Vagina (tissue), 2 donors: ENCODE measurements at regions of chr22 and their contacts with region 1.

Region 1: DNA sequence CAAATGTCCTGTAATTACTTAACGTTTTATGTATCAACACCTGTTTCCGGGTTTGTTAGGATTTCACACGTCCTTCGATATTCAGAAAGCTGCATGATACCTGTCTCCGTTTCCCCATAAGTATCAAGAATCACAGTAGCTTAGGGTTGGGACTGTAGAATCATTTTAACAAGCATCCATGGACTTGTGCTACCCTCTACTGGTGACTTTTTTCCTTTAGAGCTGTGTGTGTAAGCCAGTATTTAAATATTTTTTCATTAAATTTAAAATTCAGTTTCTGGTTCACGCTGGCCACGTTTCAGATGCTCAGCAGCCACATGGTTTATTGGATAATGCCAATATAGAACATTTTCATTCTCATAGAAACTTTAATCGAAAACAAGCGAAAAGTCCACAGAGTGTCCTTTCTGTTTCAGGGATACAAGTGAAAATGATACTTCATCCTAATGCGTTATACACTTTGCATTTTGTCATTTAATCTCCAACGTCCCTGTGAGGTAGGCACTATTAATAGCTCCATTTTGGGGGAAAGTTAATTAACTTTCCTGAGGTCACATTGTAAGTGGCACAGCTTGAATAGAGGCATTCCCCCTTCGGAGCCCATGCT is 61.5 kb upstream of the SLC25A18 start:
- DNase-seq: no peak
- H3K4me3 ChIP-seq: no peak overlapping the region
- H3K27ac ChIP-seq: no peak overlapping the region
- H3K4me1 ChIP-seq: no peaks in the 10 kb centered on the region
- H3K27me3 ChIP-seq: no peaks in the 10 kb centered on the region
- CTCF ChIP-seq: peak in 2 of 3 experiments; percentile 11 to 64
- POLR2A ChIP-seq: no peak

Region 2: DNA sequence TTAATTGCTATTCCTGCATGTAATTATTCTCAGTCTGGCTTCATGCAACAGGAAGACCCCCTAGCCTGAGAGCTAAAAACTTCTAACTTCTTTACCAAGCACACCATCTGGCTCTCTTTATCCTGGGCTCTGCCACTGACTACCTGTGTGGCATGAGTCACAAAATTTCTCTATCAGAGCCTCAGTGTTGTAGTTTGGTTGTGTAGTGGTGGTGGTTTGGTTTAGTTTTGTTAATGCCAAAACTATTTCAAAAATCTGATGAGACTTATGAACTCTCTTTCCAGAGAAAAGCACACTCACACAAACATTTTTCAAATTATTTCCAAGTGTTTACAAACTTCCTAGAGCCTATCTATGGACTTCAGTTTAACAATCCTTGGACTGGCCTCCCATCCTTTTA is 424.5 kb before region 1 on chr22:
- intact Hi-C with region 1: loop called (anchors 10 kb)
- DNase-seq: no peak
- H3K4me3 ChIP-seq: no peak overlapping the region
- H3K27ac ChIP-seq: no peak overlapping the region
- H3K4me1 ChIP-seq: no peaks in the 10 kb centered on the region
- H3K27me3 ChIP-seq: no peaks in the 10 kb centered on the region
- CTCF ChIP-seq: no peak
- POLR2A ChIP-seq: no peak

Region 3: DNA sequence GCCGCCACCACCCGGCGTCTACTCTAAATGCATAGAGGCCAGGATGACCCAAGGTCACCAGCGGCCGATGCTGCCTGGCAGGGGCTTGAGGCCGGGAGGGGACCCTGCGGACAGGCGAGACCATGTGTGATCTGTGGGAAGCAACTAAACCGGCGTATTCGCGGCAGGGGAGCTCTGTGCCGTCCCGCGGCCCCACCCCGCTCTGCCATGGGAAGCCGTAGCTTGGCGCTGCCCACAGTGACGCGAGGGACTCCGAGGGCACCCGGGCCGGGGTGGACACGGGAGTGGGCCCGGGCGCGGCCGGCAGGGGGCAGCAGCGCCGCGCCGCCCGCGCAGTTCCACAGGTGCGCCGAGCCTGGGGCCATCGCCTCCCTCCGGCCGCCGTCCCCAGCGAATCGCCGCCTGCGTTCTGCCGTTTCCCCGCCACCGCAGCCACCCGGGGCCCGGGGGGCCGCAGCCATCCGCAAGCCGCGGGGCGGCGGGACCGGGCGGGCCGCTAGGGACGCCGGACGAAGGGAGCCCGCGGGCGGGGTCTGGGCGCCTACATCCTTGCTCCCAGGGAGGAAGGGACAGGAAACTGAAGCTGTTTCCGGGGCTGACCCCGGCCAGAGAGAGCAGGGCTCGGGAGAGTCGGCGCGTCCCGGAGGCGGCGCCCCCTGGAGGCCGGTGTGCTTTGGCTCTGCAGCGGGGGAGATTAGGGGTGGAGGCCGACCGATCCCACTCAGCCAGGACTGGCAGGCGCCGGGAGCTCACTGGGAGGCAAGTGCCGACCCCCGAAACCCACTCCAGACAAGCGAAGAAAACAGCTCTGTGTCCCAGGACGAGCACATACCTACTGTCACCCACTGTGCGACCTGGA is 330.2 kb before region 1 on chr22:
- intact Hi-C with region 1: loop called (anchors 5 kb)
- DNase-seq: no peak
- H3K4me3 ChIP-seq: peak overlapping the region; percentile 48 to 64
- H3K27ac ChIP-seq: peak overlapping the region; percentile 82
- H3K4me1 ChIP-seq: peaks cover 16% of the 10 kb centered on the region
- H3K27me3 ChIP-seq: no peaks in the 10 kb centered on the region
- CTCF ChIP-seq: peak; percentile 54 to 89 (median 59)
- POLR2A ChIP-seq: no peak

Region 4: GRCh38 chr22:17540481-17540880 is 38.7 kb after region 1 on chr22:
- intact Hi-C with region 1: no loop called
- DNase-seq: no peak
- H3K4me3 ChIP-seq: no peak overlapping the region
- H3K27ac ChIP-seq: no peak overlapping the region
- H3K4me1 ChIP-seq: no peaks in the 10 kb centered on the region
- H3K27me3 ChIP-seq: no peaks in the 10 kb centered on the region
- CTCF ChIP-seq: no peak
- POLR2A ChIP-seq: no peak